Dorsolateral prefrontal cortex (tissue), 120 donors: ENCODE measurements at regions of chr5 and their contacts with region 1.

Region 1: GRCh38 chr5:103333376-103333775 is 74.8 kb downstream of the MACIR start:
- DNase-seq: no peak
- H3K4me3 ChIP-seq: no peak overlapping the region
- H3K27ac ChIP-seq: no peak overlapping the region
- H3K27me3 ChIP-seq: no peaks in the 10 kb centered on the region
- CTCF ChIP-seq: no peak

Region 2: DNA sequence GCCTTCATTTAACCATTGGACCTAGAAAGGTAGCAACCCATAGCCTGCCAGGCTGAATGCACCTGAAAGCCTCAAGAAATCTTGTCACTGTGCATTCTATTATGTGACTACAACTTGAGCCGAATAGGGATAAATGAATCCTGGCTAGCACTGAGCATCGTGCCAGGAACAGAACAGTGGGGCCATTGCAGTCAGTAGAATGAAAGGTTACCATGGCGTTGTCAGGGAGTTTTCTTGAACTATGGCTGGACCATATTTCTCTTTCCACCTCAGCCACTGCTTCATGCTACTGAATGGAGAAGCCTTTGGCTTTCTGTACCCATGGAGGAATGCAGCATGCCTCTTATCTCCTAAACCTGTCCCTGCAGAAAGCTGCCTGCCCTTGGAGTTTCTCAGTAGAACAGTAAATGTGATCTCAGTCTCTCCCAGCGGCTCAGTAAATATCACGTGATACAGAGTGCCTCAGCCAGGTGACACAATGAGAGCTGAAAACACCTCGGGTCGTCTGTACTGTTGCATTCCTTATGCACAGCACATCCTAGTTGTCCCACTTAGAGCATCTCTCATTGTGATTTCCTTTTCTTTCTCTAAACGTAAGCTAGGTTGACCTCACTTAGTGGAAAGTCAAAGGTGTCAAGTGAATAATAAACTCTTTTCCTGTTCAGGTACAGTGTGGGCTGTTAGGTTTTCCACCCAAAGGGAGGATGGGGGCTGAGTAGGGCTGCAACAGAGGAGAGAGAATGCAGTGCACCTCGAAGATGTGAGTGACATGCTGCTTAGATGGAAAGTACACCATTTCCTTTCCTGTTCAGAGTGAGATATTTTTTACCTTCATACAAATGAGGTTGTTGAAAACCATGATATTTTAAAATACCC is 40.5 kb after region 1 on chr5:
- intact Hi-C with region 1: loop called in 1 of 2 experiments (anchors 5 kb)
- DNase-seq: no peak
- H3K4me3 ChIP-seq: peak overlapping the region in 13 of 59 donors; percentile 2 to 42 (median 15)
- H3K27ac ChIP-seq: peak overlapping the region in 49 of 59 donors; percentile 1 to 77 (median 53)
- H3K27me3 ChIP-seq: no peaks in the 10 kb centered on the region
- CTCF ChIP-seq: no peak